Activated naive CD4-positive, alpha-beta T cell treated with anti-CD3 and anti-CD28 coated beads for 36 hours (primary cell): ENCODE measurements at regions of chr6 and their contacts with region 1.

Region 1: DNA sequence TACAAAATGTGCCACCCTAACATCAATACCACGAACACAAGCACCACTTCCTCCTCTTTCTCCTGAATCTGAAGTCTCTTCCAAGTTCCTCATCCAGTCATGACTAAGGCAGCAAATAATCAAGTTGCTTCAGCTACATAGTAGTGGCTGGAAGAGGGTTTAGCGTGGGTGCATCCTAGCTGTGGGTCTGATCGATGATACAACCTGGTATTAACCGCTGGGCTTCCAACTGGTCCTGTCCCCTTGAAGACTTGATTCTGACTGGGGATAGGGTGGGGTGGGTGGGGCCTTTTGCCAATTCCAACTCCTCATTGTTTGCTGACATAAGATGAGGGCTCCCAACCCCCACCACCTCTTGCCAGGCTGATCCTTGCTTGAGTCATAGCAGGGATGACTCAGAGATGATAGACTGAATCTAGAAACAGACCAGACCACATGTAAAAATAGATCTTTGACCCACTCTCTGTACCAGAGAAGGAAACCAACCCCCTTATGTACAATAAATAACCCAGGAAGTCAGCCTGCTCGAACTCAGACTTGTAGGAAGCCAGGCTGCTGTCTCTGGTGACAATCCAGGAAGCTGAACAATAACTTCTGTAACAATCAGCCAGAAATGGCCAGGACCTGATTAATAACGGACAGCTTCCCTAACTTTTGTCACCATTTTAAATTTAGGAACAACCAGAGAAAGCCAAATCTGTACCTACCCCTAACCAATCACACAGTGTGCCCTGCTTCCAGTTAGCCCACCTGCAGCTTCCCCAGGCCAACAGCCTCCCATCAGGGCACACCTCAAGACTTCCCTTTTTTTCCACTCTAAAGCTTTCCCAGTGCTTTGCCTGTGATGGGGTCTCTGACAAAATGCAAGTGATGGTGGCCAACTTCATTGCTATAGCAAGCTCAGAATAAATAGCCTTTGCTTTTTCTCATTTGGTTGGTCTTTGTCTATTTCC is 68.9 kb upstream of the FAM184A start:
- DNase-seq: peak; percentile 77
- H3K4me3 Mint-ChIP-seq: no peak overlapping the region
- H3K27ac Mint-ChIP-seq: peak overlapping the region; percentile 48
- H3K4me1 Mint-ChIP-seq: peaks cover 43% of the 10 kb centered on the region
- H3K27me3 Mint-ChIP-seq: peaks cover 6% of the 10 kb centered on the region

Region 2: GRCh38 chr6:119129148-119129967 is 18.0 kb before region 1 on chr6:
- CTCF ChIA-PET with region 1: interaction called, 8 read pairs
- intact Hi-C with region 1: loop called (anchors 1 kb)
- DNase-seq: no peak
- H3K4me3 Mint-ChIP-seq: no peak overlapping the region
- H3K27ac Mint-ChIP-seq: no peak overlapping the region
- H3K4me1 Mint-ChIP-seq: peaks cover 5% of the 10 kb centered on the region
- H3K27me3 Mint-ChIP-seq: no peaks in the 10 kb centered on the region

Region 3: GRCh38 chr6:119368951-119369350 is 221.6 kb after region 1 on chr6:
- CTCF ChIA-PET with region 1: no interaction called
- intact Hi-C with region 1: no loop called
- DNase-seq: no peak
- H3K4me3 Mint-ChIP-seq: no peak overlapping the region
- H3K27ac Mint-ChIP-seq: no peak overlapping the region
- H3K4me1 Mint-ChIP-seq: no peaks in the 10 kb centered on the region
- H3K27me3 Mint-ChIP-seq: no peaks in the 10 kb centered on the region

Region 4: DNA sequence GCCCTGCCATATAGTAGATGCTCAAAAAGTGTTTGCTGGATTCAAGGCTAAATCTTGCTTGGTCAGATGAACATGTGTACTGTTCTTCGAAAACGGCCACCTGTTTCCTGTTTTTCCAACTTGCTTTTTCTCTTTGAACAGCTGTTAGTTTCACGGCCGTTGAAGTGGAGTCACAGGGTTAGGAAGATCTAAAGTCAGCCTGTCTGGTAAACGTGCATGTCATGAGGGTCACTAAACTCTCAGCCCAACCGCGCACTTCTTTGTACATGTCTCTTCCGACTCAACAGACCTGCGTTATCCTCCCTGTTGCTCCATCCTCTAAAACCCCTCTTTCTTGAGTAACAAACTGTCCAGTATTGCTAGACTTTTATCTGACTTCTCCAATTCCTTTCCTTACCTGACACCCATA is 295.4 kb after region 1 on chr6:
- CTCF ChIA-PET with region 1: no interaction called
- intact Hi-C with region 1: loop called (anchors 10 kb)
- DNase-seq: no peak
- H3K4me3 Mint-ChIP-seq: no peak overlapping the region
- H3K27ac Mint-ChIP-seq: no peak overlapping the region
- H3K4me1 Mint-ChIP-seq: peaks cover 18% of the 10 kb centered on the region
- H3K27me3 Mint-ChIP-seq: no peaks in the 10 kb centered on the region

Region 5: DNA sequence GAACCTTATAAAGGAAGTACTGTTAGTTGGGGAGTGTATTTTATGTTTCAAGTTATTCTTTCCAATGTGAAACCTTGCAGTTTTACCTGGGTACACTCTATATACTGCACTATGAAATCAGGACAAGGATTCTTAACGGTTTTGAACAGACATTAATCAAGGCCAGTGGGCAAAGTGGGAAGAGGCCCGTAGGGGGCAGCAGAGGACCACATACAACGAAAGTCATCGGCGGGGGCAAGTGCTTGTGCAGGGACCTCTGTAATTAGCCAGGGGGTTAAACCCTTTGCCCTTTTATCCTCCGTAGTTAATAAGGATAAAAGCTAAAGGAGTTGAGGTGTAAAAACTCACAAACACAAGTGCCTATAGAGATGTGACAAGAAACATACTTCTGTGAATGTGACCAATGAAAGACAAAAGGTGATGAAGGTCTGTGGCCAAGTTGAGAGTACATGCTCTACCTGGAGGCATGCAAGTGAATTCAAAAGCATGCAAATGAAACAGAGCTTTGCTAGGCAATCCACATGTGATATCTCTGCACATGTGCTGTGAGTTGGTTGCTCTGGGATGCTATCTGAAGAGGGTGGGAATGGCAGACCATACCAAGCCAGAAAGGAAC is 594.9 kb after region 1 on chr6:
- CTCF ChIA-PET with region 1: interaction called, 3 read pairs
- intact Hi-C with region 1: loop called (anchors 1 kb)
- DNase-seq: peak; percentile 72
- H3K4me3 Mint-ChIP-seq: no peak overlapping the region
- H3K27ac Mint-ChIP-seq: no peak overlapping the region
- H3K4me1 Mint-ChIP-seq: no peaks in the 10 kb centered on the region
- H3K27me3 Mint-ChIP-seq: no peaks in the 10 kb centered on the region

Region 6: DNA sequence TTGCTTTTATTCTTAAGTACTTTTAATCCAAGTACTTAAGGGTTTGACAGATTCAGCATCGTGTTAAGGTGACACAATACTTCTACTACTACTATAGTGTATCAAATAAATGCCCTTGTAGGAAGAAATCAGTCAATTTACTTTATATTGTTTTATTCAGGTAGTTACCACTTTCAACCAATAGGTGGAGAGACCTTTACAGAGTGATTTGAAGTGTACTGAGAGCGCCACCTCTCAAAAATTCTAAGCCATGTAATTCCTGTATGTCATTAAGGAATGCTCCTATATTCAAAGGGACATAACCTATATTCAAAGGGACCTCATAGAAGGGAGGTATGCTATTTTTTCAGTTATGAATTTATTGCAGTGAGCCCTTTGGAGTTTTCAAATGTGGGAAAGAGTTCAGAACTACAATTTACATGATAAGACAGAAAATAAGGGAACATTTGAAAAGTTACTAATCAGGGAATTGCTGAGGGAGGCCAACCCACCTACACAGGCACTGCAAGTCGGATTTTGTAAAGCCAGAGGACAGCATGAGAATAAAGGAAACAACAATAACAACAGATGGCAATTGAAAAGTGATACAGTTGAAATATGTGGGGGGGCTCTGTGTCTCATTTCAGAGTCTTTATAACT is 1231.3 kb after region 1 on chr6:
- CTCF ChIA-PET with region 1: no interaction called
- intact Hi-C with region 1: loop called (anchors 10 kb)
- DNase-seq: no peak
- H3K4me3 Mint-ChIP-seq: no peak overlapping the region
- H3K27ac Mint-ChIP-seq: no peak overlapping the region
- H3K4me1 Mint-ChIP-seq: no peaks in the 10 kb centered on the region
- H3K27me3 Mint-ChIP-seq: no peaks in the 10 kb centered on the region